ENCODE measurements at regions of chr11 and their contacts with region 1.

Region 1: GRCh38 chr11:25981998-25982397 is 349.9 kb upstream of the ANO3 start:
- DNase-seq: peak; percentile 53
- ATAC-seq: peak; percentile 94
- H3K4me3 ChIP-seq: no peak overlapping the region
- H3K27ac ChIP-seq: no peak overlapping the region
- H3K4me1 ChIP-seq: no peaks in the 10 kb centered on the region
- H3K27me3 ChIP-seq: no peaks in the 10 kb centered on the region
- CTCF ChIP-seq: peak; percentile 73
- EP300 ChIP-seq: no peak
- POLR2A ChIP-seq: no peak
- RAD21 ChIP-seq: peak; percentile 50; the same call in 1 of the 2 replicates

Region 2: GRCh38 chr11:25927411-25927953 is 54.5 kb before region 1 on chr11:
- CTCF ChIA-PET with region 1: no interaction called
- POLR2A ChIA-PET with region 1: no interaction called
- in situ Hi-C with region 1: no loop called
- intact Hi-C with region 1: no loop called
- DNase-seq: no peak
- ATAC-seq: no peak
- H3K4me3 ChIP-seq: no peak overlapping the region
- H3K27ac ChIP-seq: no peak overlapping the region
- H3K4me1 ChIP-seq: no peaks in the 10 kb centered on the region
- H3K27me3 ChIP-seq: no peaks in the 10 kb centered on the region
- CTCF ChIP-seq: no peak
- EP300 ChIP-seq: no peak
- POLR2A ChIP-seq: no peak
- RAD21 ChIP-seq: no peak

Region 3: GRCh38 chr11:26028294-26028954 is 46.4 kb after region 1 on chr11:
- CTCF ChIA-PET with region 1: no interaction called
- POLR2A ChIA-PET with region 1: no interaction called
- in situ Hi-C with region 1: no loop called
- intact Hi-C with region 1: no loop called
- DNase-seq: peak; percentile 15
- ATAC-seq: peak; percentile 57
- H3K4me3 ChIP-seq: no peak overlapping the region
- H3K27ac ChIP-seq: no peak overlapping the region
- H3K4me1 ChIP-seq: no peaks in the 10 kb centered on the region
- H3K27me3 ChIP-seq: no peaks in the 10 kb centered on the region
- CTCF ChIP-seq: no peak
- EP300 ChIP-seq: no peak
- POLR2A ChIP-seq: no peak
- RAD21 ChIP-seq: no peak

Region 4: GRCh38 chr11:26134481-26135355 is 152.7 kb after region 1 on chr11:
- CTCF ChIA-PET with region 1: no interaction called
- POLR2A ChIA-PET with region 1: no interaction called
- in situ Hi-C with region 1: no loop called
- intact Hi-C with region 1: loop called (anchors 1 kb)
- DNase-seq: peak; percentile 3
- ATAC-seq: peak; percentile 63; the same call in 2 of the 3 replicates
- H3K4me3 ChIP-seq: no peak overlapping the region
- H3K27ac ChIP-seq: no peak overlapping the region
- H3K4me1 ChIP-seq: no peaks in the 10 kb centered on the region
- H3K27me3 ChIP-seq: no peaks in the 10 kb centered on the region
- CTCF ChIP-seq: peak; percentile 53
- EP300 ChIP-seq: no peak
- POLR2A ChIP-seq: no peak
- RAD21 ChIP-seq: no peak

Region 5: DNA sequence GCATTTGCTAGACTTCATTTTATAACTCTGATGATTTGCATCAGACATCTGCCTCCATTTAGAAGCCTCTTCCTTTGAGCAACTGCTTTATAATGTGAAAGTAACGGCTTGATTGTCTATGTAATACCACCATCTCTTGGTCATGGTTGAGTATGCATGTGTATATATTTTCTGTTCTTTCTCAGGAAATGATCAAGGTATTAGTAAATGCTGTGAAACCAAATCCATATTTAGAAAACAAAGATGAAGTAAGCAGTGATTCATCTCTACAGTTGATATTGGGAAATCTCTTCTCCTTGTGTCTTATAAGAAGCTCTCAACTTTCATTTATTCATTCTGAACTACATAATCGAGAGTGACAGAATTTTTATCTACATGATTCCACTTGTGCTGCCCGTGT is 245.3 kb after region 1 on chr11:
- CTCF ChIA-PET with region 1: interaction called, 13 read pairs
- POLR2A ChIA-PET with region 1: no interaction called
- in situ Hi-C with region 1: no loop called
- intact Hi-C with region 1: loop called (anchors 1 kb)
- DNase-seq: peak; percentile 4
- ATAC-seq: no peak
- H3K4me3 ChIP-seq: no peak overlapping the region
- H3K27ac ChIP-seq: no peak overlapping the region
- H3K4me1 ChIP-seq: no peaks in the 10 kb centered on the region
- H3K27me3 ChIP-seq: no peaks in the 10 kb centered on the region; a peak in 1 of 5 replicates
- CTCF ChIP-seq: peak; percentile 41; the same call in 1 of the 2 replicates
- EP300 ChIP-seq: no peak
- POLR2A ChIP-seq: no peak
- RAD21 ChIP-seq: no peak

Region 6: GRCh38 chr11:26276798-26277424 is 294.9 kb after region 1 on chr11:
- CTCF ChIA-PET with region 1: interaction called, 30 read pairs
- POLR2A ChIA-PET with region 1: no interaction called
- in situ Hi-C with region 1: loop called (anchors 5 kb)
- intact Hi-C with region 1: loop called (anchors 1 kb)
- DNase-seq: peak; percentile 38
- ATAC-seq: peak; percentile 76
- H3K4me3 ChIP-seq: no peak overlapping the region
- H3K27ac ChIP-seq: no peak overlapping the region
- H3K4me1 ChIP-seq: no peaks in the 10 kb centered on the region
- H3K27me3 ChIP-seq: no peaks in the 10 kb centered on the region
- CTCF ChIP-seq: peak; percentile 84
- EP300 ChIP-seq: no peak
- POLR2A ChIP-seq: no peak
- RAD21 ChIP-seq: peak; percentile 58